ENCODE measurements at regions of chr9 and their contacts with region 1.

Region 1: GRCh38 chr9:133023117-133023890 is 7.5 kb upstream of the GTF3C5 start:
- DNase-seq: peak; percentile 46
- CTCF ChIP-seq: no peak

Region 2: GRCh38 chr9:132800038-132800648 is 223.2 kb before region 1 on chr9:
- CTCF ChIA-PET with region 1: no interaction called
- POLR2A ChIA-PET with region 1: no interaction called
- DNase-seq: peak; percentile 79
- CTCF ChIP-seq: peak; percentile 89

Region 3: DNA sequence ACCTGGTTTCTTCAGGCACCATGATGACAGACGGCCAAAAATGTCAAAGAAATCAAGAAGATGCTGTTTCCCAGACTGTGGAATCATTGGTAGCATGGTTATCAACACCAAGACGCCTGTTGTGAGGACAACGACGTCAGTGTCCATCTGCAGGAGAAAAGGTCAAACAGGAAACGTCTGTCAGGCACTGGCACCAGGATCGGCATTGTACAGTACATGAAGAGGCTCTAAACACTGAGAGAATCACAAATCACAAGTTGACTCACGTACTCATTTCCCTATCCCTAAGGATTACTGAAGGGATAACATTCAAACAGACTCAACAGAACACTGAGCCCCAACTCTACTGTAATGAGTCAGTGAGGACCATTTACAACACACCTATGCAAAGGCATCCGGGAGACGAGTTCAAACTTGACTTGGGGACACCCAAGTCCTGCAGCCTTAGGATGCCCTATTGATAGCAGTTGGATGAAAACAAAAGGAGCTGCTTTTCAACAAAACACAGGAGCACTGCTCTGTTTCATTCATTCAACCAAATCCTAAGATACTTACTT is 99.9 kb before region 1 on chr9:
- CTCF ChIA-PET with region 1: no interaction called
- POLR2A ChIA-PET with region 1: no interaction called
- DNase-seq: no peak
- CTCF ChIP-seq: no peak

Region 4: GRCh38 chr9:132944302-132945185 is 78.8 kb before region 1 on chr9 and contains the start of gene TSC1:
- CTCF ChIA-PET with region 1: interaction called, 13 read pairs
- POLR2A ChIA-PET with region 1: no interaction called
- DNase-seq: peak; percentile 96
- CTCF ChIP-seq: no peak

Region 5: DNA sequence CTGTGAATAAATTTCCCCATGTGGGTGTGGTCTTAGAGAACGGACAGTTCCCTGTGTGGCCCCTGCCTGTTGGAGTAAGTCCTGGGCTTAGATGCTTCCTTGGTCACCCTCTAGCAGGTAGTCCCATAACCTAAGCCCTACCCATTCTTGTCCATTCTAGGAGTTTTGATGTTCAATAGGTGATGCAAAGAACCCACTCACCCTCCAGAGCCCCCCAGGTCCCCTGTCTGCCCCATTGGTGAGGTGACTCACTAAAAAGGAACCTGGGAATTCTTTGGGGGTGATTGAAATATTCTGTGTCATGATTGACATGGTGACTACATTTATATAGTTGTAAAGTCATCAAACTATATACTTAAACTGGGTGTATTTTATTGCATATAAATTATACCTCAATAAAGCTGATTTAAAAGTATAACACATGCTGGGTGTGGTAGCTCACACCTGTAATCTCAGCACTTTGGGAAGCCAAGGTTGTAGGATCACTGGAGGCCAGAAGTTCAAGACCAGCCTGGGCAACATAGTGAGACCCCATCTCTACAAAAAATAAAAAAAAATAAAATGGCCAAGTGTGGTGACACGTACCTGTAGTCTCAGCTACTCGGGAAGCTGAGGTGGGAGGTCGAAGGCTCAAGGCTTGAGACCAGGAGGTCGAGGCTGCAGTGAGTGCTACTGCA is 13.3 kb before region 1 on chr9:
- CTCF ChIA-PET with region 1: interaction called, 45 read pairs
- POLR2A ChIA-PET with region 1: no interaction called
- DNase-seq: no peak
- CTCF ChIP-seq: no peak

Region 6: GRCh38 chr9:133058550-133059320 is 35.4 kb after region 1 on chr9:
- CTCF ChIA-PET with region 1: interaction called, 12 read pairs
- POLR2A ChIA-PET with region 1: no interaction called
- DNase-seq: peak; percentile 48
- CTCF ChIP-seq: no peak

Region 7: GRCh38 chr9:133144137-133144903 is 121.0 kb after region 1 on chr9:
- CTCF ChIA-PET with region 1: interaction called, 37 read pairs
- POLR2A ChIA-PET with region 1: no interaction called
- DNase-seq: peak; percentile 89
- CTCF ChIP-seq: peak; percentile 96

Region 8: GRCh38 chr9:133184962-133185361 is 161.7 kb after region 1 on chr9:
- CTCF ChIA-PET with region 1: interaction called, 13 read pairs
- POLR2A ChIA-PET with region 1: no interaction called
- DNase-seq: peak; percentile 39
- CTCF ChIP-seq: peak; percentile 30

Measured in GM10248 (cell line).